Endothelial cell of umbilical vein (primary cell): ENCODE measurements at regions of chr16 and their contacts with region 1.

Region 1: DNA sequence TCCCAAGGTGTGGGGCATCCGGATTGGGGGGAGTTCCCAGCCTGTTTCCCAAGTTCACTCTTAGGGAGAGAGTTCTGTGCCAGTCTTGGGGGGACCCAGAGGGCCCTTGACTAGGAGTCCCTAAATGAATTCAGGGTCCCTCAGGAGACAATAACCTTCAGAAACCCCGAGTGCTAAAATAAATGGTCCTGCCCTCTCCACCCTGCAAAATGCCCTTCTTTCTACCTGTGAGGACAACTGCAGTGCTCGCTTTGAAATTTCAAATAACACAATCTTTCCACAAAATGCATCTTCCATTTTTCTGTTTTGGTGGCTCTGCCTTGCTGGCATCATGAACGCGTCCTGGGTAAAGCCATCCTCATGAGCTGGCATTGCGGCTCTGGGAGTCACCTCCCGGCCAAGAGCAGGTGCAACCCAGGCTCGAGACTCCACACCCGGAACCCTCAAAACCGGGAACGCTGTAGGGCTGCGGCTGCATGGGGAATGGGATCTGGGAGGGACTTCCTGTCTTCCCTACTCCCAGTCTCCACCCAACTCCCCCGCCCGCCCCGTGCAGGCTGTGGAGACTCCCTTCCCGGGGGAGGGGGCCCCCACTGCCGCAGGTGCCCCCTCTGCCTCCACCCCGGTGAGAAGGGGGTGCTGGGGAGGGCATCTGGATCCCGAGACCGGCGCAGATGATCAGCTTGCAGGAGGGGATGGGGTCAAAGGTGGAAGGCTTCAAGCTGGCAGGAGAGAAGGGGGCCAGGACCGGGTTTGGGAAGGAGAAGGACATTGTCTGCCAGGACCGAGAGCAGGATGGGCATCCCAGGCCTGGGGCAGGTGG is at the start of gene ZNF205:
- DNase-seq: peak; percentile 61
- H3K4me3 ChIP-seq: peak within 1 kb of the TSS; percentile 44 to 78 (median 59)
- H3K27ac ChIP-seq: no peak within 1 kb of the TSS
- H3K4me1 ChIP-seq: peaks cover 18% of the 10 kb centered on the region
- H3K27me3 ChIP-seq: no peaks in the 10 kb centered on the region
- CTCF ChIP-seq: no peak
- POLR2A ChIP-seq: peak; percentile 34
- total RNA-seq, gene ZNF205: 15.5 and 18.5 TPM in 2 replicates

Region 2: DNA sequence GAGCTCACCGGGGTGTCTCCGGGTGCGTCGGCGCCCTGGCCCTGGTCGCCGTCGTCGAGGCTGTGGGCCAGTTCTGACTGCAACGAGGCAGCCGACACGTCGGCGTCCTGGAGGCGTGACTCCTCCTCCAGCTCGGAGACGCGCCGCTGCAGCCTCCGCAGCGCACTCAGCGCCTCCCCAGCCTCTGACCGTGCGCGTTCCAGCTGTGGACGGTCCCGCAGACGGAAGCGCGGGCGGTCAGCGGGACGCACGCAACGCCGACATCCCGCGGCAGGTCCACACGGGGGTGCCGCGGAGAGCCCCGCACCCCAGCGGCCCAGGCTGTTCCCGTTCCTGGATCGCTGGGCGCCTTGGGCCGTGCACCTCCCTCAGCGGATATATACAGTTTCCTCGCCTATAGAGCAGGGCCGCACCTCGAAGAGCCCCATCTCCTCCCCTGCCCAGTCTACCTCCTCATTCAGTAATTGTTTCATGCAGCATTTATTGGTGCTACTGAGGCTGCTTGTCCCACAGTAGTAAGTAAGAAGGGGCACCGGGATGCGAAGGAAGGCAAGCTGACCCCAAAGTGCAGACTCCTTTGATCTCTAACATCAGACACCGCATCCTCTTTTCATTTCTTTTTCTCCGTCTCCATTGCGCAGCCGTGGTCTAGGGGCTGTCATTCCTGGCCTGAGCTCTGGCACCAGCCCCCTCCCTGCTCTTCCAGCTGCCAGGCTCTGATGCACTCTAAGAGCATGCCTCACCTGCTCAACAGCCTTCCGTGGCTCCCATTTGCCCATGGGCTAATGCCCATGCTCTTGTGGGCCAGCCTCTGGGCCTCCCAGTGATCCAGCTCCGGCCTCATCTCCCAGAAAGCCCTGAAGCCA is 82.5 kb before region 1 on chr16:
- CTCF ChIA-PET with region 1: interaction called, 16 read pairs
- POLR2A ChIA-PET with region 1: interaction called, 5 read pairs
- dilution Hi-C with region 1: no loop called
- intact Hi-C with region 1: no loop called
- DNase-seq: no peak
- H3K4me3 ChIP-seq: no peak overlapping the region
- H3K27ac ChIP-seq: no peak overlapping the region
- H3K4me1 ChIP-seq: no peaks in the 10 kb centered on the region
- H3K27me3 ChIP-seq: peaks cover 36 to 41% of the 10 kb centered on the region in 2 experiments
- CTCF ChIP-seq: no peak
- POLR2A ChIP-seq: no peak

Region 3: GRCh38 chr16:3094289-3095027 is 17.8 kb before region 1 on chr16:
- CTCF ChIA-PET with region 1: interaction called, 23 read pairs
- POLR2A ChIA-PET with region 1: interaction called, 6 read pairs
- dilution Hi-C with region 1: no loop called
- intact Hi-C with region 1: no loop called
- DNase-seq: peak; percentile 74
- H3K4me3 ChIP-seq: no peak overlapping the region
- H3K27ac ChIP-seq: no peak overlapping the region
- H3K4me1 ChIP-seq: peaks cover under 1% of the 10 kb centered on the region
- H3K27me3 ChIP-seq: peaks cover 0 to 2% of the 10 kb centered on the region in 2 experiments
- CTCF ChIP-seq: peak; percentile 61 to 70
- POLR2A ChIP-seq: no peak

Region 4: GRCh38 chr16:3099732-3100499 is 12.4 kb before region 1 on chr16:
- CTCF ChIA-PET with region 1: interaction called, 27 read pairs
- POLR2A ChIA-PET with region 1: interaction called, 6 read pairs
- dilution Hi-C with region 1: no loop called
- intact Hi-C with region 1: loop called (anchors 1 kb)
- DNase-seq: peak; percentile 81
- H3K4me3 ChIP-seq: no peak overlapping the region
- H3K27ac ChIP-seq: no peak overlapping the region
- H3K4me1 ChIP-seq: peaks cover 26% of the 10 kb centered on the region
- H3K27me3 ChIP-seq: peaks cover 0 to 2% of the 10 kb centered on the region in 2 experiments
- CTCF ChIP-seq: no peak
- POLR2A ChIP-seq: no peak

Region 5: DNA sequence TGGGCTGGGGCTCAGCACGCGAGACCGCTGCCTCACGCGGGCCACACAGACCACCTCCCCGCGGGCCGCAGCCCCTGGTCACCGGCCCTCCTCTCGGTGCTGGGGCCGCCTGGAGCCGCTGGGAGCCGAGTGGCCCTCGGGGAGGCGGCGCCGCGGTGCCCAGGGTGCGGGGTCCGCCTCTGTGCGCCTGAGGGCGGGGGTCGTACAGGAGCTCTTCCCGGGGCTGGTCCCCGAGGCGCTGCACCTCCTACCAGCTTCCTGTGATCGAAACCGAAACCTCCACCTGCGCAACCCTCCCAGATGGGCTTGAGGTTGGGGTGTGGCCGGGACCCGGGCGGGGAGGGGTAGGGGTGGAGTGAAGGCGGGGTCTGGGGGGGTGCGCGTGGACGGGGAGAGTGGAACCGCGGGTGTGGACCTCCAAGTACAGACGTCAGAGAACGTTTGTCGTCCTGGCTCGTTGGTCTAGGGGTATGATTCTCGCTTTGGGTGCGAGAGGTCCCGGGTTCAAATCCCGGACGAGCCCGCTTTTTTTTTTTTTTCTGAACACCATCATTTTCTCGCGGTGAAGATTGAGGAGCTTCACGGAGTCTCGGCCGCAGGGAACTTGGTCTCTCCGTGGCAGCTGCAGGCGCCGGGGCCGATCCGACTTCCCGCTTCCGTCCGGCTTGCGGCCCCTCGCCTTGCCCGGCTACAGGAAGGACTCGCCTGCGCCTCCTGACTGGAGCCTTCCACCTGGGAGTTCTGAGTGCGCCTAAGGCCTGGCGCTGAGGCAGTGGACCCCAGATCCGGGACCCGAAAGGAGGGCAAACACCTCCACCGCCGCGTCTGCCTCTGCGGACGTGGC is 46.4 kb after region 1 on chr16:
- CTCF ChIA-PET with region 1: no interaction called
- POLR2A ChIA-PET with region 1: no interaction called
- dilution Hi-C with region 1: no loop called
- intact Hi-C with region 1: no loop called
- DNase-seq: peak; percentile 84
- H3K4me3 ChIP-seq: peak overlapping the region; percentile 70 to 82 (median 76)
- H3K27ac ChIP-seq: peak overlapping the region; percentile 76
- H3K4me1 ChIP-seq: peaks cover 17% of the 10 kb centered on the region
- H3K27me3 ChIP-seq: no peaks in the 10 kb centered on the region
- CTCF ChIP-seq: no peak
- POLR2A ChIP-seq: no peak

Region 6: DNA sequence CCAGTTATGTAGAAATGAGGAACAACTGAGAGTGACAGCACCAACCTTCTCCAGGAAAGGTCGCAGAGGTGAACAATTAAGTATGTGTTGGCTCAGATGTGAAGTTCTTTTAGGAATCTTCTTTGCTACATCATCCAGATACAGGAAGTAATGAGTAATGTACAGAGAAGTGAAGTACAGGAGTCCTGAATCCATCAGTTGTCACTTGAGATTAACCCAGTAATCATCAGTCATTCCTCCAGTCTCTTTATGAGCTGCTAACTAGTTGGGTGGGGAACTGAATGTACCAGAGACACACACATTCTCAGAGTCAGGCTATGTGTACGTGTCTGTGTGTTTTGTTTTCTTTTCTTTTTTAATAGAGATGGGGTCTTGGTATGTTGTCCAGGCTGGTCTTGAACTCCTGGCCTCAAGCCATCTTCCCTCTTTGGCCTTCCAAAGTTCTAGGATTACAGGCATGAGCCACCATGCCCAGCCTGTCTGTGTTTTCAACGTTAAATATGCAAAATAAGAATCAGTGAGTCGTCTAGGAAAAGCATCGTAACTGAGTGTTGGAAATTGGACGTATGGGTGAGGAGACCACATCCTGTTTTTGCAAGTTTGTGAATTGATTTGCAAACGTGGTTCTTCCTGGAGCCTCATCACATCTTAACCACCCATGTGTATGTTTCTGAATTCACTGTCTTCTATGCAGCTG is 102.8 kb after region 1 on chr16:
- CTCF ChIA-PET with region 1: no interaction called
- POLR2A ChIA-PET with region 1: no interaction called
- dilution Hi-C with region 1: no loop called
- intact Hi-C with region 1: no loop called
- DNase-seq: no peak
- H3K4me3 ChIP-seq: no peak overlapping the region
- H3K27ac ChIP-seq: no peak overlapping the region
- H3K4me1 ChIP-seq: no peaks in the 10 kb centered on the region
- H3K27me3 ChIP-seq: no peaks in the 10 kb centered on the region
- CTCF ChIP-seq: no peak
- POLR2A ChIP-seq: no peak